ENCODE measurements at regions of chr11 and their contacts with region 1.

Region 1: GRCh38 chr11:114159802-114160632 is 100.5 kb downstream of the ZBTB16 start:
- DNase-seq: peak; percentile 79 to 100 (median 99)
- ATAC-seq: peak; percentile 97
- H3K4me3 ChIP-seq: peak overlapping the region; percentile 21
- H3K4me3 Mint-ChIP-seq: peak overlapping the region; percentile 53 to 85 (median 78)
- H3K27ac ChIP-seq: peak overlapping the region; percentile 62
- H3K27ac Mint-ChIP-seq: peak overlapping the region; percentile 88 to 98 (median 93)
- H3K4me1 ChIP-seq: peaks cover 23 to 70% of the 10 kb centered on the region in 2 donors
- H3K4me1 Mint-ChIP-seq: peaks cover 58 to 98% (median 90%) of the 10 kb centered on the region in 7 donors
- H3K27me3 ChIP-seq: no peaks in the 10 kb centered on the region
- H3K27me3 Mint-ChIP-seq: no peaks in the 10 kb centered on the region

Region 2: DNA sequence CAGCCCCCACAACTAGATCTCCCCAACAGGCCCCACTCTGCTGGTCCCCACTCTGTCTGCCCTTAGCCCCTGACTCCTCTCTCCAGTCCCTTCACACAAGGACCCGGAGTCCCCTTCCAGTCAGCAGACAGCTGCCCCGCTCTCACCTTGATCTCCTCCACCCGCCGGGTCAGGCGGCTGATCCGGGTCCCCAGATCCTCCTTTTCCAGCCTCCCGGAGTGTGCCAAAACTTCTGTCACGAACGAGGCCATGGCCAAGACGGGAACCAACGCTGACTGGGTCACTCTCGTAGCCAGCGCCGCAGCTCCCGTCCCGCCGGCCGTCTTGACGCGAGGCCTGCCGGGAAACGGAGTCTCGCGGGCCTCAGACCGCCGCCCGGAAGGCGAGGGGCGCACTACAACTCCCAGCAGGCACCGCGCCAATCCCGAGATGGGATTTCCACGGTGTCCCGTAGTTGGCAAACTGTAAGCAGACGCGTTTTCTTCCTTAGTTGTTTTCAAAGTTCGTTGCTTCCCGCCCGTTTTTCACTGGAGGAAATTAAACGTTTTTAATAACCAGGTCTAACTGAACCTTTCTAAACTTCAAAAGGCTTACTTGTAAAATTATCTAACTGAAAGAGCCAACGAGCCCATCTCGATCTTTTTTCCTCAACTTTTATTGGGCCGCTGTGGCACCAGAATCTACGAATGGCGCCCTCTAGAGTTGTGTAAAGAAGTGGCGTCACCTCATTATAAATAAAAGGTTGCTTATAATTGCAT is 386.4 kb before region 1 on chr11 and contains the start of gene ZW10:
- CTCF ChIA-PET with region 1: no interaction called
- POLR2A ChIA-PET with region 1: no interaction called
- intact Hi-C with region 1: loop called in 1 of 2 experiments (anchors 10 kb)
- DNase-seq: peak; percentile 86 to 92 (median 91)
- ATAC-seq: peak; percentile 99
- H3K4me3 ChIP-seq: peak within 1 kb of the TSS; percentile 86
- H3K4me3 Mint-ChIP-seq: peak within 1 kb of the TSS; percentile 92 to 100 (median 98)
- H3K27ac ChIP-seq: peak within 1 kb of the TSS; percentile 81
- H3K27ac Mint-ChIP-seq: peak within 1 kb of the TSS; percentile 89 to 97 (median 95)
- H3K4me1 ChIP-seq: peaks cover 0 to 4% of the 10 kb centered on the region in 2 donors
- H3K4me1 Mint-ChIP-seq: peaks cover 19 to 39% (median 30%) of the 10 kb centered on the region in 7 donors
- H3K27me3 ChIP-seq: no peaks in the 10 kb centered on the region
- H3K27me3 Mint-ChIP-seq: peaks cover 0 to 10% (median 0%) of the 10 kb centered on the region in 5 donors
- total RNA-seq, gene ZW10: 5.0 to 19.0 (median 10.2) TPM

Region 3: DNA sequence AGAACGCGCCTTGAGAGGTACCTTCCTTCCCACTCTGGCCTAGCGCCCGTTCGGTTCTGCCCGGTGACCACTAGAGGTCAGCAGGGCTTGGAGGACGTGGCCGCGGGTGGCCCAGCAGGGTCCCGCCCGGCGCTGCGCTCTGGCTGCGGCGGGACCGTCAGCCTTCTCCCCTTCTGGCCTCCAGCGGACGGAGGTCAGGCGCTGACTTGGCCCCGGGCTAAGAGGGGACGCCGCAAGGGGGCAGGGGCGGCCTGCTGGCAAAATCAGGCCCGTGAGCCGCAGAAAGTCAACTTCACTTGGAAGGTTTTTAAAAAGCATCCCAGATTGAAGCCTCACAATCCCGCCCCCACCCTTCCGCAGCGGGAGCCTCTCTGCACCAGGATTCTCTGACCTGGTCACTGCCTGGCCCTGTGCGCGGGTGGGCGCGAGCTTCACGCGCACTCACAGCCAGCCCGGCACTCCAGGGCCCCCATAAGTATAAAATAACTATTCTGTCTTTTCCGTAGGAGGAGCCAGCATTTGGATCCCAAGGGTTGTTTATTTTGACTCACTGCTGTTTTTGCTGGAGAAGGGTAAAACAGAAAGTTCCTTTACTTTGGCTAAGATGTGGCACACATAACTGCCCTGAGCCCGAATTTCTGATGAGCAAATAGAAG is 123.7 kb before region 1 on chr11:
- CTCF ChIA-PET with region 1: interaction called, 5 read pairs
- POLR2A ChIA-PET with region 1: no interaction called
- intact Hi-C with region 1: loop called in 1 of 2 experiments (anchors 1 kb)
- DNase-seq: peak; percentile 16 to 57 (median 42)
- ATAC-seq: peak; percentile 89
- H3K4me3 ChIP-seq: no peak overlapping the region
- H3K4me3 Mint-ChIP-seq: peak overlapping the region in 5 of 10 donors; percentile 11 to 57 (median 44)
- H3K27ac ChIP-seq: no peak overlapping the region
- H3K27ac Mint-ChIP-seq: peak overlapping the region in 1 of 9 donors; percentile 28
- H3K4me1 ChIP-seq: peaks cover 0 to 3% of the 10 kb centered on the region in 2 donors
- H3K4me1 Mint-ChIP-seq: peaks cover 0 to 5% (median 0%) of the 10 kb centered on the region in 7 donors
- H3K27me3 ChIP-seq: no peaks in the 10 kb centered on the region
- H3K27me3 Mint-ChIP-seq: peaks cover 0 to 34% (median 0%) of the 10 kb centered on the region in 5 donors

Region 4: DNA sequence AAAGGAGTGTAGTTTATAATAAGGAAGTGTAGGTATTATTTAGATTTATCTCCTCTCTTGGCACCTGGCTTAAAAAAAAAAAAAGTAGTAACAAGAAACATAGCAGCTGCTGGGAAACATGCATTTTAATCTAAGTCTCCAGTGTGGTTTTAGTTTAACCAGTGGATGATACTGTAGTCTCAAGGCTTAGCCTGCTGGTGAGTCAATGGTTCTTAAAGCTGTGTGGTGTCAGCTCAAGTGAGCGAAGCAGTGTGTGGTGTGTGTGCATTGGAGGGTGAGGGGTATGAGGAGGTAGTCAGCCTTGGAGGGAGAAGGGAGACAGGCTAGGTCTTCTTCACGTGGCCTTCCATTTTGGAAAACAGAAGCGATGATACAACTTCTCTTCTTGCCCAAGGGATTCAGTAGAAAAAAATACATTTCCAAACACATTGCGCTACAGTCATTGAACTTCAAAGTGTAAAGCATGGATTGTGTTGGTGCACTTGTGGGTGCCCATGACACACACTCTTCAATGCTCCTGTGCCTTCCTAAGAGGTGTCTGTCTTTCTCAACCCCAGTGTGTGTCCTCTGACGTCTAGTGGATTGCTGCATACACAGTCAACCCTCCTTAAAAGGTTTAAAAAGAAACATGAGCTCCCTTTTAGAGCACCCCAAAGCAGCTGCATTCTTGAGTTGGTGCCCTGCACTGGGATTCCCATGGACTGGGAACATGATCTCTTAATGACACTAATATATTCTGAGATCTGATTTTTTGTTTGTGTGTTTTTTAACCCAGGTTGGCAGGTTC is 60.4 kb before region 1 on chr11:
- CTCF ChIA-PET with region 1: no interaction called
- POLR2A ChIA-PET with region 1: no interaction called
- intact Hi-C with region 1: loop called in 1 of 2 experiments (anchors 2 kb)
- DNase-seq: no peak
- ATAC-seq: peak; percentile 43
- H3K4me3 ChIP-seq: no peak overlapping the region
- H3K4me3 Mint-ChIP-seq: no peak overlapping the region
- H3K27ac ChIP-seq: no peak overlapping the region
- H3K27ac Mint-ChIP-seq: peak overlapping the region in 4 of 9 donors; percentile 2 to 76 (median 54)
- H3K4me1 ChIP-seq: peaks cover 13 to 21% of the 10 kb centered on the region in 2 donors
- H3K4me1 Mint-ChIP-seq: peaks cover 19 to 75% (median 47%) of the 10 kb centered on the region in 7 donors
- H3K27me3 ChIP-seq: no peaks in the 10 kb centered on the region
- H3K27me3 Mint-ChIP-seq: peaks cover 0 to 28% (median 0%) of the 10 kb centered on the region in 5 donors

Region 5: DNA sequence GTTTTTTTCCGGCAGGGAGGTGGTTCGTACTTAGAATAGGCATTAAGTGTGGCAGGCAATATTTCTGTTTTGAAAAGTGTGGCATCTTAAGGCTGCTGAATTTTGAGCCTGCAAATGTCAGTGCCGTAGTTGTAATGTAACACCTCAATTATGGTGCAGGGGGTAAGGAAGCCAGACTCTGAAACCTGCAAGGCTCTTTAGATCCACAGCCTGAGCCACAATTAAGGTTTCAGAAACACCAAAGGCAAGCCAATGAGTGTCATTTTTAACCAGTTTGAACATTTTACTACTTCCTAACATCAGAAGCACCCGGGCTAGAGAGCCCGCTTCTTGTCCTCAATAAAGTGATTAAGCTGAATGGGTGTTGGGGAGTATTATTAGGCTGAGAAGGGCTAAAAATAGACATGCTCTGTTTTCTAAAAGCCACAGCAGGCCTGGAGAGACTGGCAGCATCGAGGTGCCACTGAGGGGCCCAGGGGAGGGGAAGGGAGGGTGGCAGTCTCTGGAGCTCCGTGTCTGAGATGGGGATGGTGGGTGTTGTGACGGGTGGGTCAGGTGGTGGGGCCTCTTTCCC is 12.9 kb after region 1 on chr11:
- CTCF ChIA-PET with region 1: interaction called, 10 read pairs
- POLR2A ChIA-PET with region 1: interaction called, 363 read pairs
- intact Hi-C with region 1: loop called in 1 of 2 experiments (anchors 1 kb)
- DNase-seq: peak in 6 of 9 donors; percentile 54 to 77 (median 63)
- ATAC-seq: peak; percentile 84
- H3K4me3 ChIP-seq: peak overlapping the region; percentile 14
- H3K4me3 Mint-ChIP-seq: peak overlapping the region; percentile 34 to 78 (median 71)
- H3K27ac ChIP-seq: peak overlapping the region; percentile 40
- H3K27ac Mint-ChIP-seq: peak overlapping the region; percentile 76 to 98 (median 96)
- H3K4me1 ChIP-seq: peaks cover 59 to 82% of the 10 kb centered on the region in 2 donors
- H3K4me1 Mint-ChIP-seq: peaks cover 65 to 98% (median 90%) of the 10 kb centered on the region in 7 donors
- H3K27me3 ChIP-seq: no peaks in the 10 kb centered on the region
- H3K27me3 Mint-ChIP-seq: peaks cover 0 to 4% (median 0%) of the 10 kb centered on the region in 5 donors

Region 6: GRCh38 chr11:114208377-114208776 is 48.4 kb after region 1 on chr11:
- CTCF ChIA-PET with region 1: interaction called, 3 read pairs
- POLR2A ChIA-PET with region 1: no interaction called
- intact Hi-C with region 1: loop called in 1 of 2 experiments (anchors 1 kb)
- DNase-seq: peak in 6 of 9 donors; percentile 16 to 41 (median 38)
- ATAC-seq: peak; percentile 92
- H3K4me3 ChIP-seq: no peak overlapping the region
- H3K4me3 Mint-ChIP-seq: peak overlapping the region in 7 of 10 donors; percentile 2 to 32 (median 22)
- H3K27ac ChIP-seq: no peak overlapping the region
- H3K27ac Mint-ChIP-seq: peak overlapping the region in 6 of 9 donors; percentile 1 to 69 (median 33)
- H3K4me1 ChIP-seq: peaks cover 14 to 16% of the 10 kb centered on the region in 2 donors
- H3K4me1 Mint-ChIP-seq: peaks cover 19 to 45% (median 30%) of the 10 kb centered on the region in 7 donors
- H3K27me3 ChIP-seq: no peaks in the 10 kb centered on the region
- H3K27me3 Mint-ChIP-seq: peaks cover 0 to 4% (median 0%) of the 10 kb centered on the region in 5 donors